ENCODE measurements at regions of chr7 and their contacts with region 1.

Region 1: DNA sequence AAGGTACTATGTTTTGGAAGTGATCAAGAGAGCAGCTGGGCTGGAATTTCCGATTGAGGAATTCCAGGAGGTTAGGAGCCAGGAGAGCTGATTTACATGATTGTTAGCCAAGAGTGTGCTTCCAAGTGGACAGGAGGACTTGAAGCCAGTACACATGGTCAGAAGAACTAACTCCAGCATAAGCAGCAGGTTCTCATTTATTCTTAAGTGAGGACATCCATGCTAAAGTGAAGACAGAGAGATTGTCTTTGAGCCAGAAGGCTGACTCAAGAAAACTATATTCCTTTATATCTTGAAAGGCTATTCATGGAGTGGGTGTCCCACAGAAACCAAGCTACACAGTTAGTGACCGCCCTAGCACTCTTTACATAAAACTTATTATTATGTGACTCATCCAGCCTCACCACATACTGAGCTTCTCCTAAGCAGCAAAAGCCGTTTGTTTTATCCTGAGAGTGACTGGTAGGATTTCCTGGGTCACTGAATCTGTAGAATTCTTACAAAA is 56.7 kb upstream of the SEMA3A start:
- DNase-seq: peak; percentile 90
- ATAC-seq: peak; percentile 94
- H3K4me3 ChIP-seq: no peak overlapping the region
- H3K27ac ChIP-seq: 0 out of 2 replicates have a peak overlapping the region, but pooled peaks have one; percentile 15
- H3K4me1 ChIP-seq: peaks cover 8% of the 10 kb centered on the region
- H3K27me3 ChIP-seq: no peaks in the 10 kb centered on the region
- CTCF ChIP-seq: no peak
- POLR2A ChIP-seq: no peak
- RAD21 ChIP-seq: no peak

Region 2: GRCh38 chr7:84202855-84203254 is 48.5 kb before region 1 on chr7:
- CTCF ChIA-PET with region 1: no interaction called
- POLR2A ChIA-PET with region 1: no interaction called
- dilution Hi-C with region 1: no loop called
- in situ Hi-C with region 1: no loop called
- intact Hi-C with region 1: loop called (anchors 1 kb)
- DNase-seq: no peak
- ATAC-seq: no peak
- H3K4me3 ChIP-seq: no peak overlapping the region
- H3K27ac ChIP-seq: no peak overlapping the region
- H3K4me1 ChIP-seq: no peaks in the 10 kb centered on the region; the same call in 1 of the 2 replicates
- H3K27me3 ChIP-seq: no peaks in the 10 kb centered on the region
- CTCF ChIP-seq: no peak
- POLR2A ChIP-seq: no peak
- RAD21 ChIP-seq: no peak

Region 3: DNA sequence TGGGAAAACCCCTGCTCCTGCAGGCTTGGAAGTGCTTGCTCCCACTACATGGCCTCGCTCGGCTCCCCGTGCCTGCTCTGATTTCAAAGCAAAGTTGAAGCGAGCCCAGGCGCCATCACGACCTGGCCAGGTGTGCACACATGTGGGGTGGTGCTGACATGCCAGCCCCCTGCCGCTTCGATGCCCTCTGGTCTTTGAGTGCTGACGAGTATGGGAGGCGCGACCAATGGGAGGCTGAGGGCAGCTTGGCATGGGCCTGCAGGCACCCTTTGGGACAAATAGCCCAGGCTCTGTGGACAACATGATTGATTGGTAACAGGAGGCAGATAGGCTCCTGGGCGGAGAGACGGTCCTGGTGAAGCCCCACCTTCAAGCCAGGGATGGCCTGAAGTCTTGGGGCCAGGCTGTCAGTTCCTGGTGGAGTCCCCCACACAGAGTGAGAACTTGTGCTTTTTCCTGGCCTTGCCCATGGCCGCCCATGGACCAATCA is 195.7 kb after region 1 on chr7:
- CTCF ChIA-PET with region 1: no interaction called
- POLR2A ChIA-PET with region 1: no interaction called
- dilution Hi-C with region 1: no loop called
- in situ Hi-C with region 1: no loop called
- intact Hi-C with region 1: no loop called
- DNase-seq: no peak
- ATAC-seq: no peak
- H3K4me3 ChIP-seq: no peak overlapping the region
- H3K27ac ChIP-seq: no peak overlapping the region
- H3K4me1 ChIP-seq: no peaks in the 10 kb centered on the region
- H3K27me3 ChIP-seq: no peaks in the 10 kb centered on the region
- CTCF ChIP-seq: no peak
- POLR2A ChIP-seq: no peak
- RAD21 ChIP-seq: no peak